ENCODE measurements at regions of chr2 and their contacts with region 1.

Region 1: DNA sequence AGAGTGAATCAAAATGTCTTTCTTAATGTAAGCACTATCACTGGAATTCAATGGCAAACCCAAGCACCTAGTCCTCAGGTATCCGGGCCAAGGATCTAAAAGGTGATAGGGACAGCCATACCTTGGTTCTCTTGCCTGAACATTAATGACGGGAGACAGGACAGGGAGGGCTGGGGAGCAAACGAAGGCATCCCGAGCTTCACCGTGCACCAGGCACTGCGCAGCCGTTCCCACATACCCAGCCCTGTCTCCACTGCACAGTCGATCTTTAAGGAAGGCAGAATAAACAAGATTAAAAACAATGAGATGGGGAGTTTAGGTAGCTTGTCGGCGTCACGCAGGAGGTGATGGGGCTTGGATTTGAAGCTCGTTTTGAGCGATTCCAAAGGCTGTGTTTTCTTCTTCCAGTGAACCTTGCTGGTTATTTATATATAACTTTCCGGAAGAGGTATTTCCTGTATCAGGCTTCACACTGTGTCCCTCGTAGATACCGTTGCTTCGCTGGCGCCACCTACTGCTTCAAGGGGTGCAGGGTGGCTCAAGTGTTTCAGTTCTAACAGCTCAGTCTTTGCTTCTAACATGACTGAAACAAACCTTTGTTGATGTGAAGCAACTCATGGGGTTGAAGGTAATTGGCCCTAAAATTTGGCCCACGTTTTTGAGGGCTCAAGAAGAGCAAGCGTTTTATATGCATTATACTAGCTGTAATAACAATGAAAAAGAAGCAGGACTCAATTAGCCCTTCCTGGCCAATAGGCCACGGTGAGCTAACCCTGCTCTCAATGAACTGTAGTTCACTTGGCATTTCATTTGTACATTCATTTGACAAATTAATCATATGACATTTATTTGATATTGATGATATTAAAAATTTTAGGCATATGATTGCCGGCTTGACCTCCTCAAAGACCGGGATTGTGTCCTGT is 77.4 kb downstream of the DCDC2C start:
- DNase-seq: peak; percentile 35 to 55
- ATAC-seq: peak in 1 of 4 donors; percentile 54
- H3K4me3 ChIP-seq: no peak overlapping the region
- H3K27ac ChIP-seq: no peak overlapping the region
- H3K4me1 ChIP-seq: no peaks in the 10 kb centered on the region
- H3K27me3 ChIP-seq: peaks cover 0 to 9% (median 2%) of the 10 kb centered on the region in 3 donors
- CTCF ChIP-seq: peak; percentile 46

Region 2: GRCh38 chr2:2735041-2735440 is 1045.7 kb before region 1 on chr2:
- intact Hi-C with region 1: loop called in 1 of 2 experiments (anchors 10 kb)
- DNase-seq: no peak
- ATAC-seq: no peak
- H3K4me3 ChIP-seq: no peak overlapping the region
- H3K27ac ChIP-seq: no peak overlapping the region
- H3K4me1 ChIP-seq: no peaks in the 10 kb centered on the region
- H3K27me3 ChIP-seq: no peaks in the 10 kb centered on the region
- CTCF ChIP-seq: no peak

Region 3: DNA sequence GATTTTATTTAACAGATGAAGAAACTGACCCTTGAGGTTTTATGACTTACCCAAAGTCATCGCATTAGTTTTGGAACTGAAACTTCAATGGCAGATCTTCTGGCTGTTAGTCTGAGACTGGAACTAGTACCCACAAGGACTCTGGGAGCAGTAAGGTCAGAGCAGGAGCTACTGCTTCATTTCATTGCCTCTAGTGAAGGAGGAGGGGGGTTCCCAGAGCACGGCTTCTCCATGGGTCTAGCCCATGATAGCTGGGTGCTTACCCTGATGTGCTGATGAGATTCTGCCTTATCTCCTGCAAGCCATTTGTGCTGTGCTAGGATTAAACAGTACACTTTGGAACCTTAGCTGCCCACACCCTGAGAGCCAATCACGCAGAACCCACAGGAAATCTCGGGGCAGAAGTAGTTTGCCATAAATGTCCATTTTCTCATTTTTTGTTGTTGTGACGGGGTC is 217.2 kb before region 1 on chr2:
- intact Hi-C with region 1: no loop called
- DNase-seq: no peak
- ATAC-seq: no peak
- H3K4me3 ChIP-seq: no peak overlapping the region
- H3K27ac ChIP-seq: no peak overlapping the region
- H3K4me1 ChIP-seq: peaks cover 5% of the 10 kb centered on the region
- H3K27me3 ChIP-seq: no peaks in the 10 kb centered on the region
- CTCF ChIP-seq: no peak

Region 4: DNA sequence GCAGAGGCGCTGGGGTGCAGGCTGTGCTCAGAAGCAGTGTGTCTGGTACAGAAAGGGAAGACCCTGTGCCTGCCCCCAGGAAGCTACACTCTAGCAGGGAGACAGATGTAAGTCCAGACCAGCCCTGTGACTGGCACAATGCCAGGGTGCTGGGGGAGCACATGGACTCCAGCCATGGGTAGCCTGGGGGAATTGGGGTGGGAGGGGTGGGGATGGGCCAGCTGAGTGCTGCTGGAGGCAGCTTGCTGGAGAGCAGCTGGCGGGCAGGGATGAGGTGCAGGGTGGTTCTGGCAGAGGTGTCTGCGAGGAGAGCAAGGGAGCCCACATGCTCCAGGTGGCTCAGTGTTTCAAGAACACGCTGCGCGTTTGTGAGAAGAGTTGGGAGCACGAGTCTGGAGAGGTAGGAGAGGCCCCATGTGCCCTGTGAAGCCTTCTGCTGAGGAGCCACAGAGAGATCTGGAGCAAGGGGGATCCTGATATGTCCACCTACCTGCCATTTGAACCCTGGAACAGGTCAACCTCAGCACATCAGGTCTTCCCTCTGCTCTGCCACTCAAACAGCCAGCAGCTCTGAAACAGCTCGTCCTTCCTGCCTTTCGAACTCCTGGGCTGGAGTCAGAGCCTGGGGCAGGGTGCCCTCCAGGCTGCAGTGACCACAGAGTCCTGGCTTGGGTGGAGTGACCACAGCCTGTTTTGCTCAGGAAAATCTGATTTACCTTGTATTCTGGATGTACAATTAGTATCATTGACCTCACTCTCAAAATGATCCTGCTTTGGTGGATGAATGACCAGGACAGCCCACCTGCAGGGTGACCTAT is 107.7 kb before region 1 on chr2:
- intact Hi-C with region 1: no loop called
- DNase-seq: no peak
- ATAC-seq: no peak
- H3K4me3 ChIP-seq: no peak overlapping the region
- H3K27ac ChIP-seq: no peak overlapping the region
- H3K4me1 ChIP-seq: no peaks in the 10 kb centered on the region
- H3K27me3 ChIP-seq: peaks cover 0 to 2% (median 0%) of the 10 kb centered on the region in 3 donors
- CTCF ChIP-seq: no peak

Measured in psoas muscle (tissue), 8 donors.